ENCODE measurements at regions of chr18 and their contacts with region 1.

Region 1: GRCh38 chr18:61502472-61502871 is 169.2 kb downstream of the CDH20 start:
- DNase-seq: no peak
- H3K4me3 ChIP-seq: no peak overlapping the region
- H3K27ac ChIP-seq: no peak overlapping the region
- H3K4me1 ChIP-seq: no peaks in the 10 kb centered on the region
- H3K27me3 ChIP-seq: peaks cover 0 to 21% (median 0%) of the 10 kb centered on the region in 4 donors
- CTCF ChIP-seq: peak; percentile 47 to 55 (median 50)
- EP300 ChIP-seq: no peak
- POLR2A ChIP-seq: no peak

Region 2: DNA sequence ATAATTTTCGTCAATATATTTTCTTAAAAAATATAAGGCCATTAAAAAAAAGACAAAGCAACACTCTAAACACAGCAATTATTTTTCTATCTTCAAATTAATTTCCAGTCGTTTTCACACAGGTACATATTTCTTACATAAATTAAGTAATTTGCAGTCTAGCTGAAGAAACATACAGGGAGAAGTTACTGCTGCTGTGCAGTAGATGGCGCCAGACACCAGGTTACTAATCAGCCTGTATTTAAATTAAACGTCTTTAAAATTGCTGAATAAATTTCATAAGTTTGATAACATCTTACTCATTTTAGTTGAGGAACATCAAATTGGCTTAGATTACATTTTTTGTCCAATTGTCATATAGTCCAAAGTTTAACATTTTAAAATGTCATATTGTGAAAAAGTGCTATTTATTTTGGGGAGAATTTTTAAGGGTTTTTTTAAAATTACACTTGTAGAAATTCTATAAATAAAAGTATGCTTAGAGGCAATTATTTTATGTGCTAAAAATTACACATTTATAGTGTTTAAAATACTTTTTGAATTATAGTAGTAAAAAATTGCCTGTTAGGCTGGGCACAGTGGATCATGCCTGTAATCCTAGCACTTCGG is 1514.3 kb before region 1 on chr18:
- intact Hi-C with region 1: loop called (anchors 5 kb)
- DNase-seq: no peak
- H3K4me3 ChIP-seq: no peak overlapping the region
- H3K27ac ChIP-seq: no peak overlapping the region
- H3K4me1 ChIP-seq: no peaks in the 10 kb centered on the region
- H3K27me3 ChIP-seq: no peaks in the 10 kb centered on the region
- CTCF ChIP-seq: peak; percentile 85 to 93 (median 91)
- EP300 ChIP-seq: no peak
- POLR2A ChIP-seq: no peak

Region 3: DNA sequence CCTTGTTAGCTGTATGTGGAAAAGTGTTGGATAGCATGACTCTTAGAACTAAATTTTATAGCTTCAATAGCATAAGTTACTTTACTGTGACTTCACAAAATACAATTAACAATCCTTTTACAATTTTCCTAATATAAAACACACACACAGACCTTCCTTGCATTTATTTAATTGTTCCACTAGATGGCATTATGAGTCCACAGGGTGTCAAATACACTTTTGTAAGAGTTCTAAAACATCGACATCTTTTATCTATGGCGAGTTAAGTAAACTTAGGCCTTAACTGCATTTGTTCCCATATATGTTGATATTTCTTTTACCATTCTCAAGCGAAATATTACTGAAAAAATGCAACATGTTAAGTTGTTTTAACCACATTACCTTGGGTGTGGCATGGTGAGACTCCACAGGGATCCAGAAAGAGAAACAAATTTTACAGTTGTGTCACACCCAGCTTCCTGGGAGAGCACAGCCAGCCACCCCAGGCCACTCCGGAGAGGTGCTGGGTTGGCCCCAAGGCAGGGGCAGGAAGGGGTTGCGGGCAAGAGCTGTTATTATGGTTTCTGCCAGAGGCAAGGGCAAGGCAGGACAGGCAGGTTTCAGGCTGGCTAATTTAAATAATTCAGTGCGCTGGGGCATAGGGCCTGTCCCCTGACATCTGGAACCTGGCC is 817.5 kb before region 1 on chr18:
- intact Hi-C with region 1: loop called (anchors 5 kb)
- DNase-seq: no peak
- H3K4me3 ChIP-seq: no peak overlapping the region
- H3K27ac ChIP-seq: no peak overlapping the region
- H3K4me1 ChIP-seq: no peaks in the 10 kb centered on the region
- H3K27me3 ChIP-seq: peaks cover 0 to 3% (median 0%) of the 10 kb centered on the region in 4 donors
- CTCF ChIP-seq: peak; percentile 36 to 49 (median 40)
- EP300 ChIP-seq: no peak
- POLR2A ChIP-seq: no peak

Measured in esophagus muscularis mucosa (tissue), 4 donors.